A673 (cell line): ENCODE measurements at regions of chr11 and their contacts with region 1.

Region 1: DNA sequence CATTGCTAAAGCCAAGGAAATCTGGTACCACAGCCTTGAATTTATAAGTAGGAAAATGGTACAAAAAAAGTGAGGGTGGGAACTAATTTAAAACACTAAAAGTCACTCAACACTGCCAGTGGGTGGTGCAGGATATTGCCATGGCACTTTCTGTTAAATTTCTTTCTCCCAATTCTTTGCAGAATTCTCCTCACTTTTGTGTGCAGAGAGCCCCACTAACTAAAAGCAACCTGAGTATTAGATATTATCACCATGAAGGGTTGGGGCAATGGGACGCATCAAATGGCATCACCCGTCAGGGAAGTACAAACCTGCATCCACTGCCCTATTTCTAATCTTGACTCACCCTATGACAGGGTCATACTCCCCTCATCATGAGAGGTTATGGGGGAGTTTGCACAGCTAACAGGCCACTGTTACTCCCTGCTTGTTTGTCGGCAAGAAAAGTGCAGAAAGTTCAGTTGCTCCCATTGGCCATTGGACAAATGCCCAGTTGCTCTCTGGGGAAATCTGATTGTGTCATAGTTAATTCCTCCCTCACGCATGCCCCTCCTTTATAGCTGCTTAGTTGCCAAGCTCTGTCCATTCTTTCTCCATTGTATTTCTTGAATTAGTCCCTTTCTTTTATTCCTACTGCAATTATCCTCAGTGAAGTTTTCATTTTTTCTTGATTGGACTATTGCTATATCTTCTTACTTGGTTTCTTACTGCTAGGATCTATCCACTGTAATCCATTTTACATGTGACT is 93.8 kb upstream of the BLID start:
- DNase-seq: peak; percentile 78
- H3K4me3 ChIP-seq: no peak overlapping the region
- H3K27ac ChIP-seq: no peak overlapping the region
- H3K4me1 ChIP-seq: peaks cover 20% of the 10 kb centered on the region
- H3K27me3 ChIP-seq: no peaks in the 10 kb centered on the region
- CTCF ChIP-seq: no peak

Region 2: GRCh38 chr11:122523846-122524805 is 314.3 kb after region 1 on chr11:
- CTCF ChIA-PET with region 1: no interaction called
- POLR2A ChIA-PET with region 1: no interaction called
- intact Hi-C with region 1: no loop called
- DNase-seq: peak; percentile 97
- H3K4me3 ChIP-seq: peak overlapping the region; percentile 10
- H3K27ac ChIP-seq: peak overlapping the region; percentile 77
- H3K4me1 ChIP-seq: peaks cover 43% of the 10 kb centered on the region
- H3K27me3 ChIP-seq: no peaks in the 10 kb centered on the region
- CTCF ChIP-seq: no peak

Region 3: DNA sequence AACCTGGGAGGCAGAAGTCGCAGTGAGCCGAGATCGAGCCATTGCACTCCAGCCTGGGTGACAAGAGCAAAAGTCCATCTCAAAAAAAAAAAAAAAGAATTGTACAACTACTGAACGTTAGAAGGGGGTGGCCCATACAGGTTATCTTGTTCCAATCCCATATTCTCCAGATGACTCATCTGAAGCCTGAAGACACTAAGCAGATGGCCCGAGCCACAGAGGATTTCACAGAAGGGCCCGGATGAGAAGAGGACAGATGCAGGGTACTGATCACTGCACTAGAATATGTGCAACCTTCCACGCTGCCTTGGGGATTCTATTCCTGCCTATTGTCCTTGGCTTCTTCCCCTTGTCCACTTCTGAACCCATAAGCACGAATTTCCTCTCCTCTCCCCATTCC is 374.9 kb after region 1 on chr11:
- CTCF ChIA-PET with region 1: no interaction called
- POLR2A ChIA-PET with region 1: no interaction called
- intact Hi-C with region 1: loop called (anchors 5 kb)
- DNase-seq: no peak
- H3K4me3 ChIP-seq: no peak overlapping the region
- H3K27ac ChIP-seq: no peak overlapping the region
- H3K4me1 ChIP-seq: no peaks in the 10 kb centered on the region
- H3K27me3 ChIP-seq: no peaks in the 10 kb centered on the region
- CTCF ChIP-seq: no peak